ENCODE measurements at regions of chr5 and their contacts with region 1.

Region 1: DNA sequence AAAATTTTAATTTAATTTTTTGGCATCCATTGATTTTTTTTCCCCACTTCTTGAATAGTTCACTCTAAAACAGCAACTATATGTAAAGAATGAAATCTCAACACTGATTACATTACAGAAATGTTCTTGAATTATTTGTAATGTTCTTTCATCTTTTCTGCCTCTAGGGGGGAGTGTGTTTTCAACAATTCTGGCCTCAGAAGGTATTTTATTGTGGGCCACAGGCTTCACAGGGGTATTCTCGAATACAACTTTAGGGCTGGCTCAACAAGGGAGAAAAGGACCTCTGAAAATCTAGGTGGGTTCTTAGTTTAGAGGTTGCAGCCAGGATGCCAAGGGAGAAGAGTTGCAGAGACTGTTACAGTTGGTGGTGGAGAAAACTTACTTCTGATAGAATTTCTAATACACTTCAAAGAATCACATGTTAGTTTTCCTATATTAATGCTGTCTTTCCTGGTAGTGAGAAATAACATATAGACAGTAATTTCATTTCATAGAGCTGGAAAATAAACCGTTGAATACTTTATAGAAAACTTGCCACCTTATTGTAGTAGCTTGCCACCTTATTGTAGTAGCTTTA is 3.6 kb upstream of the NPR3 start:
- H3K4me3 ChIP-seq: no peak overlapping the region
- H3K27ac ChIP-seq: no peak overlapping the region
- H3K4me1 ChIP-seq: peaks cover 5% of the 10 kb centered on the region; the same call in 1 of the 2 replicates
- CTCF ChIP-seq: no peak

Region 2: GRCh38 chr5:32690153-32690552 is 17.4 kb before region 1 on chr5:
- CTCF ChIA-PET with region 1: interaction called, 16 read pairs
- POLR2A ChIA-PET with region 1: no interaction called
- H3K4me3 ChIP-seq: no peak overlapping the region
- H3K27ac ChIP-seq: no peak overlapping the region
- H3K4me1 ChIP-seq: no peaks in the 10 kb centered on the region
- CTCF ChIP-seq: no peak

Region 3: GRCh38 chr5:33180900-33181299 is 473.4 kb after region 1 on chr5:
- CTCF ChIA-PET with region 1: interaction called, 12 read pairs
- POLR2A ChIA-PET with region 1: no interaction called
- H3K4me3 ChIP-seq: no peak overlapping the region
- H3K27ac ChIP-seq: no peak overlapping the region
- H3K4me1 ChIP-seq: peaks cover 11% of the 10 kb centered on the region
- CTCF ChIP-seq: peak; percentile 45; the same call in 1 of the 2 replicates

Measured in HEK293 (cell line).